ENCODE measurements at regions of chr1 and their contacts with region 1.

Region 1: GRCh38 chr1:153990468-153991150 is at the start of gene RPS27:
- DNase-seq: peak; percentile 93 to 97 (median 95)
- H3K4me3 ChIP-seq: peak within 1 kb of the TSS; percentile 87 to 92
- H3K4me3 Mint-ChIP-seq: peak within 1 kb of the TSS; percentile 94 to 99 (median 98)
- H3K27ac ChIP-seq: peak within 1 kb of the TSS; percentile 93
- H3K27ac Mint-ChIP-seq: peak within 1 kb of the TSS; percentile 93 to 100 (median 100)
- H3K4me1 ChIP-seq: peaks cover 37% of the 10 kb centered on the region
- H3K4me1 Mint-ChIP-seq: peaks cover 22 to 42% (median 34%) of the 10 kb centered on the region in 4 donors
- H3K27me3 ChIP-seq: no peaks in the 10 kb centered on the region
- H3K27me3 Mint-ChIP-seq: peaks cover 2 to 3% of the 10 kb centered on the region in 2 donors
- total RNA-seq, gene RPS27: 6,785 to 7,292 TPM

Region 2: DNA sequence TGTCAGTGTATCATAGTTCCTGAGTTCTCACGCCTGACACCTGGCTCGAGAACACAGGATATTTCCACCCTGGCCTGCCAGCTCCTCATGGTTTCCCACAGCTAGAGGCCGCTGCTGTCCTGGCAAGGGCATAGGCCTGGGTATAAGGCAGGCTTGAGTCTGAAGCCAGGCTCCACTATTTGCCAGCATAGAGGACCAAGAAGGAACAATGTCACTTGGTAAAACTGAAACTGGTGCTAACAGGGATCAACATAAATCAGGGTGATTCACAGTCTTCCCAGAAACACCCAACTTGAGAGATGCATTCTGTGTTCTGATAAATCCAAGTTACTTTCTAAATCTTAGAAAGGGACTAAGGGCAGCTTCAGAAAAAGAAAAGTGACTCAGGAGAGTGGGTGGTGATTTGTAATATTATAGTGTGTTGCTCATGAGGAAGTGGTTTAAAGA is 418.0 kb before region 1 on chr1:
- CTCF ChIA-PET with region 1: no interaction called
- POLR2A ChIA-PET with region 1: no interaction called
- intact Hi-C with region 1: loop called (anchors 1 kb)
- DNase-seq: peak in 4 of 5 donors; percentile 24 to 45 (median 30)
- H3K4me3 ChIP-seq: no peak overlapping the region
- H3K4me3 Mint-ChIP-seq: no peak overlapping the region
- H3K27ac ChIP-seq: no peak overlapping the region
- H3K27ac Mint-ChIP-seq: peak overlapping the region in 3 of 7 donors; percentile 15 to 41 (median 27)
- H3K4me1 ChIP-seq: peaks cover 14% of the 10 kb centered on the region
- H3K4me1 Mint-ChIP-seq: peaks cover 9 to 27% (median 12%) of the 10 kb centered on the region in 4 donors
- H3K27me3 ChIP-seq: no peaks in the 10 kb centered on the region
- H3K27me3 Mint-ChIP-seq: peaks cover 0 to 5% of the 10 kb centered on the region in 2 donors

Region 3: DNA sequence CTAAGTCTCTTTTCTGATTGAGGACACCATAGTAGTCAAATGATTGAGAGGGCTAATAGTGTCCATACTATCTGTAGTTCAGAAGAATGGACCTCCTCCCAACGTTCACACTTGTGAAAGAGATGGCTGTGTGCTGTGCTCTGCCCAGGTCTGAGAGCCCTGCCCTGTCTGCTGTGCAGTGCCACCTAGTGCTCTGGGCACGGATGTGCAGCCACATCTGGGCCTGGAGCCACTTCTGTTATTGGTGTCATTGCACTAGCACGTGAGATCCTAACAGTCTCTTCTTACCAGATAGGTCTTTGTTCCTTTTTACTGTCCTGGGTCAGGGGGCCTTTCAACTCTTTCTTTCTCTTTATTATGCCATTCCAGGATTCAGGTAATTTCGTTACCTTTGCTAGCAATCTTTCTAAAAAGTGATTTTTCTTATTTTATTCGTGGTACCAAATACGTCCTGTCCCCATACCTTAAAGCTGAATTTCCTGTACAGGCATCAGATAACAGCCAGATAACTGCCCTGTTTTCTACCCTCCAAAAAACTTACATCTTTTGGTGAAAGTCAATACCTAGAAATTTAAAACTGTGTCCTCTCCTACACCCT is 241.1 kb before region 1 on chr1:
- CTCF ChIA-PET with region 1: interaction called, 3 read pairs
- POLR2A ChIA-PET with region 1: interaction called, 6 read pairs
- intact Hi-C with region 1: loop called (anchors 1 kb)
- DNase-seq: peak; percentile 73 to 78 (median 77)
- H3K4me3 ChIP-seq: no peak overlapping the region
- H3K4me3 Mint-ChIP-seq: no peak overlapping the region
- H3K27ac ChIP-seq: no peak overlapping the region
- H3K27ac Mint-ChIP-seq: peak overlapping the region in 3 of 7 donors; percentile 6 to 73 (median 70)
- H3K4me1 ChIP-seq: no peaks in the 10 kb centered on the region
- H3K4me1 Mint-ChIP-seq: peaks cover 0 to 8% (median 5%) of the 10 kb centered on the region in 4 donors
- H3K27me3 ChIP-seq: no peaks in the 10 kb centered on the region
- H3K27me3 Mint-ChIP-seq: no peaks in the 10 kb centered on the region

Region 4: GRCh38 chr1:153805042-153805745 is 185.4 kb before region 1 on chr1:
- CTCF ChIA-PET with region 1: interaction called, 169 read pairs
- POLR2A ChIA-PET with region 1: interaction called, 12 read pairs
- intact Hi-C with region 1: no loop called
- DNase-seq: peak; percentile 85 to 95 (median 87)
- H3K4me3 ChIP-seq: no peak overlapping the region
- H3K4me3 Mint-ChIP-seq: peak overlapping the region in 7 of 8 donors; percentile 7 to 69 (median 38)
- H3K27ac ChIP-seq: peak overlapping the region; percentile 52
- H3K27ac Mint-ChIP-seq: peak overlapping the region; percentile 87 to 96 (median 90)
- H3K4me1 ChIP-seq: peaks cover 22% of the 10 kb centered on the region
- H3K4me1 Mint-ChIP-seq: peaks cover 21 to 43% (median 29%) of the 10 kb centered on the region in 4 donors
- H3K27me3 ChIP-seq: no peaks in the 10 kb centered on the region
- H3K27me3 Mint-ChIP-seq: no peaks in the 10 kb centered on the region

Region 5: GRCh38 chr1:153946622-153947241 is 43.9 kb before region 1 on chr1 and contains the start of gene DENND4B:
- CTCF ChIA-PET with region 1: interaction called, 33 read pairs
- POLR2A ChIA-PET with region 1: interaction called, 76 read pairs
- intact Hi-C with region 1: loop called (anchors 1 kb)
- DNase-seq: peak; percentile 69 to 79 (median 74)
- H3K4me3 ChIP-seq: peak within 1 kb of the TSS; percentile 47 to 72
- H3K4me3 Mint-ChIP-seq: peak within 1 kb of the TSS; percentile 89 to 99 (median 96)
- H3K27ac ChIP-seq: peak within 1 kb of the TSS; percentile 83
- H3K27ac Mint-ChIP-seq: peak within 1 kb of the TSS; percentile 96 to 98 (median 98)
- H3K4me1 ChIP-seq: peaks cover 35% of the 10 kb centered on the region
- H3K4me1 Mint-ChIP-seq: peaks cover 18 to 45% (median 30%) of the 10 kb centered on the region in 4 donors
- H3K27me3 ChIP-seq: no peaks in the 10 kb centered on the region
- H3K27me3 Mint-ChIP-seq: peaks cover 0 to 4% of the 10 kb centered on the region in 2 donors
- total RNA-seq, gene DENND4B: 211 to 216 TPM

Region 6: DNA sequence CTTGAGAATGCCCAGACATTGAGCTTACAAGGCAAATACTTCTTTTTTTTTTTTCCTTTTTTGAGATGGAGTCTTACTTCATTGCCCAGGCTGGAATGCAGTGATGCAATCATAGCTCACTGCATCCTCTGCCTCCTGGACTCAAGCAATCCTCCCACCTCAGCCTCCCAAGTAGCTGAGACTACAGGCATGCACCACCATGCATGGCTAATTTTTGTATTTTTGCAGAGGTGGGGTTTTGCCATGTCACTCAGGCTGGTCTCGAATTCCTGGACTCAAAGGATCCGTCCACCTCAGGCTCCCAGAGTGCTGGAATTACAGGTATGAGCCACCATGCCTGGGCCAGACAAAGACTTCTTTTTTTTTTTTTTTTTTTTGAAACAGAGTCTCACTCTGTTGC is 85.1 kb after region 1 on chr1:
- CTCF ChIA-PET with region 1: no interaction called
- POLR2A ChIA-PET with region 1: no interaction called
- intact Hi-C with region 1: no loop called
- DNase-seq: no peak
- H3K4me3 ChIP-seq: no peak overlapping the region
- H3K4me3 Mint-ChIP-seq: no peak overlapping the region
- H3K27ac ChIP-seq: no peak overlapping the region
- H3K27ac Mint-ChIP-seq: no peak overlapping the region
- H3K4me1 ChIP-seq: no peaks in the 10 kb centered on the region
- H3K4me1 Mint-ChIP-seq: no peaks in the 10 kb centered on the region
- H3K27me3 ChIP-seq: no peaks in the 10 kb centered on the region
- H3K27me3 Mint-ChIP-seq: peaks cover 9 to 12% of the 10 kb centered on the region in 2 donors

Region 7: GRCh38 chr1:154157520-154158306 is 167.1 kb after region 1 on chr1:
- CTCF ChIA-PET with region 1: no interaction called
- POLR2A ChIA-PET with region 1: interaction called, 33 read pairs
- intact Hi-C with region 1: no loop called
- DNase-seq: peak; percentile 80 to 91 (median 85)
- H3K4me3 ChIP-seq: peak overlapping the region in 1 of 2 donors; percentile 6
- H3K4me3 Mint-ChIP-seq: peak overlapping the region; percentile 50 to 88 (median 80)
- H3K27ac ChIP-seq: peak overlapping the region; percentile 47
- H3K27ac Mint-ChIP-seq: peak overlapping the region; percentile 89 to 96 (median 95)
- H3K4me1 ChIP-seq: peaks cover 66% of the 10 kb centered on the region
- H3K4me1 Mint-ChIP-seq: peaks cover 49 to 71% (median 61%) of the 10 kb centered on the region in 4 donors
- H3K27me3 ChIP-seq: no peaks in the 10 kb centered on the region
- H3K27me3 Mint-ChIP-seq: no peaks in the 10 kb centered on the region

Region 8: DNA sequence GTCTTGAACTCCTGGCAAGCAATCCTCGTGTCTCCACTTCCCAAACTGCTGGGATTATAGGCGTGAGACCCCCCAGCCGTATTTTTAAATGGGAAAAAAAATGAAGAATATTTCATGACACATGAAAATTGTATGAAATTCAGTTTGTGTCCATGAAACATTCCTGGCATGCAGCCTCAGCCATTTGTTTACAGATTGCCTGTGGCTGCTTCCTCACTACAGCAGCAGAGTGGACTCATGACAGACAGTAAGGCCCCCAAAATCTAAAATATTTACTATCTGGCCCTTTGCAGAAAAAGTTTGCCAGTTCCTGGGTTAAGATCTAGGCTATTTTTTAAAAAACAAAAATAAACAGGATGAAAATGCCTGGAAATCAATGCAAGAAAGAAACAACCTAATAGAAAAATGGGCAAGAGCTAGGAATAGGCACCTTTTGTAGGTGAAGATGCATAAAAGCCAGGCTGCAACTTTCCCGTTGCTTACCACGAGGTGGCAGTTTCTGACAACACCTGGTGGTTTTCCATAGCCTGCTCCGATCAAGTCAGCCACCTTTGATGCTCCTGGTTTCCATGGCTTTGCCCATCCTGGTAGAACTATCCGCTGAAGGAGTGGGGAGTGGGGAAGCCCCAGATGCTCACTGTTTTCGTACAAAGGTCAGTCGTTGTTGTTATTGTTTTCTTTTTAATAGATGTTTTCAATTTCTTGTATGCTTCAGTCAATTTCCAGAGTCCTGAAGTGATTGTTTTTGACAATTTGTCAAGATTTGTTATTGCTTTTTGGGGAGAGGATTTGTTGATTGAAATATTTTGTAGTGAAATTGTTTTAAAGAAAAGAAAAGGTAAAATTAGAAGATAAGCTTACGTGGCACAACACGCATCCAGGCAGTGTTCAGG is 543.6 kb after region 1 on chr1:
- CTCF ChIA-PET with region 1: no interaction called
- POLR2A ChIA-PET with region 1: no interaction called
- intact Hi-C with region 1: no loop called
- DNase-seq: peak in 1 of 5 donors; percentile 10
- H3K4me3 ChIP-seq: no peak overlapping the region
- H3K4me3 Mint-ChIP-seq: no peak overlapping the region
- H3K27ac ChIP-seq: no peak overlapping the region
- H3K27ac Mint-ChIP-seq: no peak overlapping the region
- H3K4me1 ChIP-seq: no peaks in the 10 kb centered on the region
- H3K4me1 Mint-ChIP-seq: no peaks in the 10 kb centered on the region
- H3K27me3 ChIP-seq: peaks cover 5% of the 10 kb centered on the region
- H3K27me3 Mint-ChIP-seq: peaks cover 3 to 7% of the 10 kb centered on the region in 2 donors

Region 9: GRCh38 chr1:154784924-154785531 is 794.4 kb after region 1 on chr1:
- CTCF ChIA-PET with region 1: no interaction called
- POLR2A ChIA-PET with region 1: no interaction called
- intact Hi-C with region 1: no loop called
- DNase-seq: peak; percentile 61 to 73 (median 68)
- H3K4me3 ChIP-seq: no peak overlapping the region
- H3K4me3 Mint-ChIP-seq: peak overlapping the region; percentile 7 to 87 (median 56)
- H3K27ac ChIP-seq: peak overlapping the region; percentile 40
- H3K27ac Mint-ChIP-seq: peak overlapping the region; percentile 56 to 95 (median 90)
- H3K4me1 ChIP-seq: peaks cover 25% of the 10 kb centered on the region
- H3K4me1 Mint-ChIP-seq: peaks cover 16 to 33% (median 27%) of the 10 kb centered on the region in 4 donors
- H3K27me3 ChIP-seq: no peaks in the 10 kb centered on the region
- H3K27me3 Mint-ChIP-seq: no peaks in the 10 kb centered on the region

Measured in CD4-positive, alpha-beta memory T cell (primary cell).